Kidney (tissue), 22 donors: ENCODE measurements at regions of chr11 and their contacts with region 1.

Region 1: DNA sequence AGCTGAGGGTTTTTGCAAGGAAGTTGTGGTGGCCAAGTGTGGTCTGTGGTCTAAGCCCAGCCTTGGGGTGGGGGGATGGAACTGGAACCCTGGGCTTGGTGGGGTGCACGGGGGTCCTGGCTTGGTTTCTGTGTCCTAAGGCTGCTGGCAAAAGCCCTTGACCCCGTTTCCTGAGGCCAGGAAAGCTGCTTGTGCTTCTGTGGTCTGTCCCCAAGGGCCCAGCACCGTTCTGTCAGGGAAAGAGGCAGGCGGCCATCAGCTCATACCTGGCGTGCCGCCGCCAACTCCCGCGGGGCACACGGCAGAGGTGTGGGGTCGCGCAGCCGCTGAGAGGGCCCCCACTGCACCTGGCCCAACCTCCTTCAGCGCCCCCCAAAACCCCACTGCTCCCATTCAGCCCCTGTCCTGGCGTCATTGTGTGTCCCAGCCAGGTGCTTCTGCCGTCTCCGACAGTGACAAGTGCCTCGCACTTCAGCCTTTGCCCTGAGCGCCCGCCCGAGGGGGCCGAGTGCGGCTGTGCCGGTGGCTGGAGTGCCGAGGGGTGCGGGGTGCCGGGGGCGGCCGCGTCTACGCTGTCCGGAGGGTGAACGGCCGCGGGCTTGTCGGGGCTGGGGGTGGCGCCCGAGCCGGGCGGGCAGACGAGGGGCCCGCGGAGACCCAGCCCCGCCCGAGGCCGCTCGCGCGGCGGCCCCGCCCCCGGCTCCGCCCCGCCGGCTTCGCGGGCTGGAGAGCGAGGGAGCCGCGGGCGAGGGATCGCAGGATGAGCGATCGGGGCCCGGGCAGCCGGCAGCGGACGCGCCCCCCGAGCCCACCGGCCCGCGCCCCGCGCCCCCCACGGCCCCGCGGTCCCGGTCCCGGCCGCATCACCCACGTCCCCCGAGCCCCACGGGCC is at the start of gene CNIH2:
- DNase-seq: peak in 3 of 5 donors; percentile 37 to 76 (median 64)
- H3K4me3 ChIP-seq: no peak within 1 kb of the TSS
- H3K27ac ChIP-seq: no peak within 1 kb of the TSS
- H3K4me1 ChIP-seq: peaks cover 0 to 4% (median 0%) of the 10 kb centered on the region in 3 donors
- H3K27me3 ChIP-seq: no peaks in the 10 kb centered on the region
- CTCF ChIP-seq: no peak
- total RNA-seq, gene CNIH2: 0.63 TPM

Region 2: GRCh38 chr11:66222358-66223149 is 55.2 kb before region 1 on chr11:
- intact Hi-C with region 1: loop called (anchors 10 kb)
- DNase-seq: peak; percentile 90 to 97 (median 94)
- H3K4me3 ChIP-seq: peak overlapping the region in 1 of 3 donors; percentile 21
- H3K27ac ChIP-seq: peak overlapping the region in 1 of 2 donors; percentile 43
- H3K4me1 ChIP-seq: no peaks in the 10 kb centered on the region
- H3K27me3 ChIP-seq: no peaks in the 10 kb centered on the region
- CTCF ChIP-seq: peak; percentile 100